Right cardiac atrium (tissue), 5 donors: ENCODE measurements at regions of chr1 and their contacts with region 1.

Region 1: GRCh38 chr1:226121587-226122400 is 59.3 kb downstream of the H3-3A start:
- DNase-seq: peak; percentile 65 to 90 (median 89)
- ATAC-seq: peak; percentile 79 to 83
- H3K4me3 ChIP-seq: peak overlapping the region; percentile 75
- H3K27ac ChIP-seq: peak overlapping the region; percentile 4
- H3K4me1 ChIP-seq: no peaks in the 10 kb centered on the region
- H3K27me3 ChIP-seq: no peaks in the 10 kb centered on the region

Region 2: GRCh38 chr1:226062558-226063223 is 59.1 kb before region 1 on chr1 and contains the start of gene H3-3A:
- intact Hi-C with region 1: loop called (anchors 5 to 10 kb)
- DNase-seq: peak; percentile 99 to 100 (median 100)
- ATAC-seq: peak; percentile 95
- H3K4me3 ChIP-seq: peak within 1 kb of the TSS; percentile 96
- H3K27ac ChIP-seq: peak within 1 kb of the TSS; percentile 100
- H3K4me1 ChIP-seq: no peaks in the 10 kb centered on the region
- H3K27me3 ChIP-seq: no peaks in the 10 kb centered on the region
- total RNA-seq, gene H3-3A: 304 to 344 (median 328) TPM

Region 3: DNA sequence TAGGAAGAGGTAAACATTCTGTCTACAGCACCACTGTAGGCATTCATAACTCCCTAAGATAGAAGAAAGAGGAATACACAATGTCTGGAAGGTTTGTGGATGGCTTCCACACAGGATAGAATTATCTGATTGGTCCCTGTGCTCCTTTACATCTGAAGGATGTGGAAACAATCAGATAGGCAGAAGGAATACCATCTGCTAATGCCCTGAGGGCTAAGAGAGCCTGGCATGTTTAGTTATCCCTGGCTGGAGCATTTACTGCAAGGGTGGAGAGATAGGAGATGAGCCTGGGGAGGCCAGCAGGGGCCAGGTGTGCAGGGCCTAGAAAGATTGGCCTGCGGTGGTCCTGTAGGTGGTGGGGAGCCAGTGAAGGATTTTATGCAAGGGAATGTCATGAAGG is 73.3 kb after region 1 on chr1:
- intact Hi-C with region 1: loop called (anchors 2 to 5 kb)
- DNase-seq: no peak
- ATAC-seq: no peak
- H3K4me3 ChIP-seq: no peak overlapping the region
- H3K27ac ChIP-seq: no peak overlapping the region
- H3K4me1 ChIP-seq: no peaks in the 10 kb centered on the region
- H3K27me3 ChIP-seq: no peaks in the 10 kb centered on the region

Region 4: GRCh38 chr1:226201029-226201593 is 79.3 kb after region 1 on chr1:
- intact Hi-C with region 1: loop called (anchors 2 to 5 kb)
- DNase-seq: no peak
- ATAC-seq: no peak
- H3K4me3 ChIP-seq: no peak overlapping the region
- H3K27ac ChIP-seq: no peak overlapping the region
- H3K4me1 ChIP-seq: no peaks in the 10 kb centered on the region
- H3K27me3 ChIP-seq: no peaks in the 10 kb centered on the region

Region 5: GRCh38 chr1:226332947-226333346 is 211.2 kb after region 1 on chr1:
- intact Hi-C with region 1: loop called in 1 of 4 experiments (anchors 5 kb)
- DNase-seq: no peak
- ATAC-seq: no peak
- H3K4me3 ChIP-seq: no peak overlapping the region
- H3K27ac ChIP-seq: no peak overlapping the region
- H3K4me1 ChIP-seq: no peaks in the 10 kb centered on the region
- H3K27me3 ChIP-seq: no peaks in the 10 kb centered on the region